Activated naive CD8-positive, alpha-beta T cell treated with anti-CD3 and anti-CD28 coated beads, Interleukin-2, amount 10 ng/mL, durations not matched to agents 7 days and 5 days (primary cell): ENCODE measurements at regions of chr5 and their contacts with region 1.

Region 1: GRCh38 chr5:134140530-134141201 is 26.2 kb downstream of the TCF7 start:
- DNase-seq: peak; percentile 71
- ATAC-seq: peak; percentile 45
- H3K4me3 Mint-ChIP-seq: no peak overlapping the region
- H3K27ac Mint-ChIP-seq: peak overlapping the region; percentile 80
- H3K4me1 Mint-ChIP-seq: peaks cover 59% of the 10 kb centered on the region
- H3K27me3 Mint-ChIP-seq: no peaks in the 10 kb centered on the region

Region 2: GRCh38 chr5:134041570-134042411 is 98.9 kb before region 1 on chr5:
- POLR2A ChIA-PET with region 1: interaction called, 44 read pairs
- DNase-seq: no peak
- ATAC-seq: peak; percentile 31
- H3K4me3 Mint-ChIP-seq: peak overlapping the region; percentile 40
- H3K27ac Mint-ChIP-seq: peak overlapping the region; percentile 77
- H3K4me1 Mint-ChIP-seq: peaks cover 30% of the 10 kb centered on the region
- H3K27me3 Mint-ChIP-seq: peaks cover 5% of the 10 kb centered on the region

Region 3: DNA sequence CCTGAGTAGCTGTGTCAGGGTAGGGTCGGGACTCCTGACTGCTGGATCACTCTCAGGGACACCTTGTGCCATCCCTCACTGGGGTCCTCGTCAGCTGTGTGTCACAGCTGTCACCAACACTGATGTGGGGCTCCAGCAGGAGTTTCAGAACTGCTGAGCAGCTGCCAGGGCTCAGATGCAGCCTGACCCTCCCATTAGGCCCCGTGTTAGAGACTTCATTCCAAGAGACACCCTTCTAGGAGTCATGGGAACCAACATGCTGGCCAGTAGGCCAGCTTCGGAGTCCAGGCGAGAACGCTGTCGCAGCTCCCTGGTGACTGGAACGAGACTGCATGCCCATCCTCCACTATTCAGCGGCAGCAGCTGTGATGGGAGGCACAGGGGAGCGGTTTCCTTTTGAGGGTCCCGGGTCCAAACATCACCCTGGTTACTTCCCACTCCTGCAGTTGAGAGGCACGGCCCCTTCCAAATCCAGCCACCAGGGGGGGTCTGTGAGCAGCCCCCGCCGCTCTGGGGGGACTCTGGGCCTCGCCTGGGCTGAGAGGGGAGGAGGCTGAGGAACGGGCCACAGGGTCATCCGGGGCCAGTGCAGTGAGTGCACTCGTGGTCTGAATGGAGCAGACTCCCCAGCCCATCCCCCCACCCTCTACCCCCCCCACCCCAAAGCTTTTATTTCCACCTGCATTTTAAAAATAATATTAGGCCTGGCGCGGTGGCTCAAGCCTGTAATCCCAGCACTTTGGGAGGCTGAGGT is 38.8 kb before region 1 on chr5:
- POLR2A ChIA-PET with region 1: interaction called, 53 read pairs
- DNase-seq: peak; percentile 88
- ATAC-seq: peak; percentile 43
- H3K4me3 Mint-ChIP-seq: no peak overlapping the region
- H3K27ac Mint-ChIP-seq: no peak overlapping the region
- H3K4me1 Mint-ChIP-seq: peaks cover 67% of the 10 kb centered on the region
- H3K27me3 Mint-ChIP-seq: no peaks in the 10 kb centered on the region

Region 4: DNA sequence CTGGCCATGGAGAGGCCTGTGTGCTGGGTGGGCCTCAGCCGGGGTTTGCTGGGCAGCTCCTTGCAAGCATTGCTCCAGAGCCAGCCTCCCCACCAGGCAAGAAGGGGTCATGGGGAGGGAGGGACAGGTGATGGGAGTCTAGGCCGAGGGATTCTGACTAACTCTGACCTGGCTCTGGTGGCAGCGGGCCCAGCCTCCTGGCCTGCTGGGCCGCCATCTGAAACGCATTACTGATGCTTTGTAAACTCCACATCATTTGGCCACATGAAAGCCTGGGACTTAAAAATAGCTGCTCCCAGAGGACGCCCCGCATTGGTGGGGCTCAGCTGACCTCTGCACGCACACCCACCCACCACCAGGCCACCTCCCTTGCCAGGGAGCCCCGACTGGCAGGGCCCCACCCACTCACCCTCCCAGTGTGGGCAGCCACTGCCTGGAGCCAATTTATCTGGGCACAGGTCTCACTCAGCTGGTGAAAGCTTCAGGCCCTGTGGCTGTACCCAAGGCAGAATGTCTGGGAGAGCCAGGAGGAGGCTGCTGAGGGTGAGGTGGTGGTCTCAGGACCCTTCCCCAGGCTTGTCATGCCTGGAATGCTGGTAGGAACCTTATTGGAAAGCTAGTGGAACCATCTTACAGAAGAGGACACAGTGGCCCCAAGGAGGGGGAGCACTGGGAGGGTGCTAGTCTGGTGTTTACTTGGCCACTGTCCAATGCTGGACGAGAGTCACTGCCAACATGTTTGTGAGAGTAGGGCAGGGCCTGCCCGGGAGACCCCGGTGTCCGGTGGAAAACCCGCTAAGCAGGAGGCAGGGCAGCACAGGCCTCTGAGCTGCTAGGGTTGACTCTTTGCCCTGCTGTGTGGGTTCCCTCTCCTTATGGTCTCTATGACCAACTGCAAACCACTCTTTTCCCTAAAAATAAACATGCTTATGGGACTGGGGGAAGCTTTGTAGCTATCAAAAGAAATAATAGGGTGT is 15.3 kb before region 1 on chr5:
- POLR2A ChIA-PET with region 1: interaction called, 60 read pairs
- DNase-seq: peak; percentile 43
- ATAC-seq: no peak
- H3K4me3 Mint-ChIP-seq: peak overlapping the region; percentile 46
- H3K27ac Mint-ChIP-seq: peak overlapping the region; percentile 74
- H3K4me1 Mint-ChIP-seq: peaks cover 84% of the 10 kb centered on the region
- H3K27me3 Mint-ChIP-seq: no peaks in the 10 kb centered on the region